ENCODE measurements at regions of chr1 and their contacts with region 1.

Region 1: GRCh38 chr1:227094249-227094966 is 154.3 kb downstream of the COQ8A start:
- DNase-seq: no peak
- H3K4me3 ChIP-seq: no peak overlapping the region
- CTCF ChIP-seq: no peak

Region 2: GRCh38 chr1:227161470-227161869 is 67.1 kb after region 1 on chr1:
- in situ Hi-C with region 1: loop called (anchors 5 kb)
- DNase-seq: no peak
- H3K4me3 ChIP-seq: no peak overlapping the region
- CTCF ChIP-seq: no peak